ENCODE measurements at regions of chr17 and their contacts with region 1.

Region 1: GRCh38 chr17:29671661-29672060 is 48.9 kb upstream of the CORO6 start:
- DNase-seq: no peak
- ATAC-seq: no peak
- H3K4me3 ChIP-seq: no peak overlapping the region
- H3K27ac ChIP-seq: no peak overlapping the region
- H3K4me1 ChIP-seq: peaks cover 2% of the 10 kb centered on the region; the same call in 1 of the 2 replicates
- H3K27me3 ChIP-seq: no peaks in the 10 kb centered on the region
- CTCF ChIP-seq: no peak
- POLR2A ChIP-seq: no peak
- RAD21 ChIP-seq: no peak

Region 2: DNA sequence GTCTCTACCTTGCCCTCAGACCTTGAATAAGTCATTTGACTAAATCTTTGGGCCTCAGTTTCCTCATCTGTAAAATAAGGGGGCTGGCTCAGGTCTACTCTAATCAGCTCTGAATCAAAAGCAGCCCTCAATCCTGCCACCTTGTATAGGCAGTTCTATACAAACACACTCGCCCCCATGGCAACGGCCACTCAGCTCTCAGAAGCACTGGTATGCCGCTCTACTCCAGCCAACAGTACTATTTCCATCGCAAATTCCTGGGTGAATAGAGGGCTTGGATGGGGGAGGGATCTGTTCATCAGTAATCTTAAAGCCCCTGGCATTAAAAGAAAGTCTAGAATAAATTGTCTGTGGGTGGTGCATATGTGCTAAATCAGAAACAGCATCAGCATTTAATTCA is 302.7 kb before region 1 on chr17:
- CTCF ChIA-PET with region 1: no interaction called
- POLR2A ChIA-PET with region 1: no interaction called
- dilution Hi-C with region 1: no loop called
- in situ Hi-C with region 1: no loop called
- intact Hi-C with region 1: no loop called
- DNase-seq: peak; percentile 40
- ATAC-seq: peak; percentile 30; the same call in 1 of the 2 replicates
- H3K4me3 ChIP-seq: no peak overlapping the region
- H3K27ac ChIP-seq: no peak overlapping the region
- H3K4me1 ChIP-seq: no peaks in the 10 kb centered on the region
- H3K27me3 ChIP-seq: no peaks in the 10 kb centered on the region
- CTCF ChIP-seq: no peak
- POLR2A ChIP-seq: no peak
- RAD21 ChIP-seq: no peak

Region 3: GRCh38 chr17:29645515-29646051 is 26.1 kb before region 1 on chr17:
- CTCF ChIA-PET with region 1: no interaction called
- POLR2A ChIA-PET with region 1: no interaction called
- dilution Hi-C with region 1: no loop called
- in situ Hi-C with region 1: no loop called
- intact Hi-C with region 1: loop called (anchors 2 kb)
- DNase-seq: peak; percentile 82
- ATAC-seq: peak; percentile 71
- H3K4me3 ChIP-seq: no peak overlapping the region
- H3K27ac ChIP-seq: peak overlapping the region; percentile 93; the same call in 1 of the 2 replicates
- H3K4me1 ChIP-seq: peaks cover 18% of the 10 kb centered on the region
- H3K27me3 ChIP-seq: no peaks in the 10 kb centered on the region
- CTCF ChIP-seq: no peak
- POLR2A ChIP-seq: no peak
- RAD21 ChIP-seq: no peak